ACHN (cell line): ENCODE measurements at regions of chr10 and their contacts with region 1.

Region 1: DNA sequence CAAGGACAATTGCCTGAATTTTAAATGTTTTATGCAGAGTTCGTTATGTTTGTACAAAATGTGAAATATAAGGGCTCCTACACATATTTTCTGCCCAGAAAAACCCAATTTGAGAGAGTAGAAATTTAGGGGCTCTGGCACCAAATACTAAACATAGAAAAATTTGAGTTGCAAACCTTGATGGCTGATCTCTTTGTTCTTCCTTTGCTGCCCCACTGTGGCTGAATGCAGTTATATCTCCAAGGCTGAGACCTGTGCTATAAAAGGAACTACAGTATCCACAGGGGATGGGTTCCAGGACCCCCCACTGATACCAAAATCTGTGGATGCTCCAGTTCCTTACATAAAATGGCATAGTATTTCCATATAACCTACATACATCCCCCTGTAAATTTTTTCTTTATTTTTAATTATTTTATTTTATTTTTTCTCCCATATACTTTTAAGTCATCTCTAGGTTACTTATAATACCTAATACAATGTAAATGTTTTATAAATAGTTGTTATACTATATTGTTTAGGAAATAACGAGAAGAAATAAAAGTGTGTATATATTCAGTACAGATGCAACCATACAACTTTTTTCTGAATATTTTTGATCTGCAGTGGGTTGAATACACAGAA is 22.5 kb downstream of the CFAP43 start:
- DNase-seq: peak; percentile 66

Region 2: GRCh38 chr10:104002911-104003310 is 206.8 kb before region 1 on chr10:
- in situ Hi-C with region 1: loop called (anchors 25 kb)
- DNase-seq: no peak

Region 3: DNA sequence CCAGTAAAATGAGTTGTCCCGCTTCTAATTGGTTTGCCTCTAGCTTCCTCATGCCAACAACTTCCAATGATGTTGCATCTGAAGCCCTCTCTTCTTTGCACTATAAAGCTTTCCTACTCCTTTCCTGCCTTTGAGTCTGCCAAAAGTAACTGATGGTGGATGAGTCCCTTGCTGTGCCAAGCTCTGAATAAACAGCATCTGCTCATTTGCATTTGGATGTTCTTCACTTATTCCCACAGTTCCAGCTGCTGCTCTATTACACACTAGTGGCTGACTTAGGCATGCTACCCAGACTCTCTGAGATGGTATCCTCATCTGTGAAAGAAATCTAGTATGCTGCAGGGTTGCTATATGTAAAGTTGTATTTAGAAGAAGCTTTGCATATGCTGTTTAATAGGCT is 62.8 kb before region 1 on chr10:
- in situ Hi-C with region 1: loop called (anchors 10 kb)
- DNase-seq: no peak

Region 4: GRCh38 chr10:104577861-104578521 is 368.3 kb after region 1 on chr10:
- in situ Hi-C with region 1: no loop called
- DNase-seq: no peak